Adrenal gland (tissue), 19 donors: ENCODE measurements at regions of chr5 and their contacts with region 1.

Region 1: GRCh38 chr5:143824851-143825720 is 13.1 kb downstream of the HMHB1 start:
- DNase-seq: peak; percentile 68 to 93 (median 82)
- H3K4me3 ChIP-seq: no peak overlapping the region
- H3K27ac ChIP-seq: no peak overlapping the region
- H3K4me1 ChIP-seq: no peaks in the 10 kb centered on the region
- H3K27me3 ChIP-seq: no peaks in the 10 kb centered on the region
- CTCF ChIP-seq: peak; percentile 87 to 95 (median 92)
- POLR2A ChIP-seq: no peak

Region 2: GRCh38 chr5:142922223-142922952 is 902.7 kb before region 1 on chr5:
- intact Hi-C with region 1: loop called in 1 of 2 experiments (anchors 10 kb)
- DNase-seq: no peak
- H3K4me3 ChIP-seq: no peak overlapping the region
- H3K27ac ChIP-seq: no peak overlapping the region
- H3K4me1 ChIP-seq: peaks cover 0 to 21% of the 10 kb centered on the region in 2 donors
- H3K27me3 ChIP-seq: no peaks in the 10 kb centered on the region
- CTCF ChIP-seq: peak; percentile 22 to 70 (median 54)
- POLR2A ChIP-seq: no peak

Region 3: GRCh38 chr5:143002459-143003328 is 822.4 kb before region 1 on chr5:
- intact Hi-C with region 1: loop called in 1 of 2 experiments (anchors 10 kb)
- DNase-seq: peak in 5 of 7 donors; percentile 23 to 56 (median 35)
- H3K4me3 ChIP-seq: no peak overlapping the region
- H3K27ac ChIP-seq: peak overlapping the region in 2 of 5 donors; percentile 53 to 63
- H3K4me1 ChIP-seq: peaks cover 6 to 30% of the 10 kb centered on the region in 2 donors
- H3K27me3 ChIP-seq: no peaks in the 10 kb centered on the region
- CTCF ChIP-seq: peak; percentile 26 to 64 (median 54)
- POLR2A ChIP-seq: no peak

Region 4: DNA sequence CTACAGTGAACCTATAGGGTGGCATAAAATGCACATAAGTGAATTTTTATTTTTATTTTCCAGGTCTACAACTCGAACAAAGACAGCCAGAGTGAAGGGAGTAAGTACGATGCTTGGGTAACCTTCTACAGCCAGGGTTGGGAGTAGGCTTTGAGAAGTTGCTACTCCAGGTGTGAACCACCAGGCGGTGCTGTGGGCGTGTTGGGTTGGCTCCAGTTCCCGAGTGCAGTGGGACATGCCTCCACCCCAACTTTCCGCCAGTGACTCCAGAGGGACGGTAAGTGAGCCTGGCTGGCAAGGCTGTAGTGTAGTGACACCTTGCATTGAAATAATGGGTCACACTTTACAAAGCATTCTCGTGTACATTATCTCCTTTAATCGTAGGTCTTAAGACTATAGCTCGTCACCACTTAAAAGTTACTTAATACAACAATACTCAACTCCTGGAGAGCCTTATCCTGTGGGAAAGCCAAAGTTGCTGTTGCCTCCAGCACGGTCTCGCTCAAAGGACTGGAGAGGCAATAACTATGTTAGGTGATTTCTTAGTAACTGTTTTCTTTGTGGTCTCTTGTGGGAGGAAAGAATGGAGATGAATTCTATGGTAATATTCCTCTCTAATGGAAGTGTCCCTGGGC is 811.0 kb before region 1 on chr5:
- intact Hi-C with region 1: loop called (anchors 5 to 10 kb)
- DNase-seq: peak in 4 of 7 donors; percentile 16 to 51 (median 32)
- H3K4me3 ChIP-seq: no peak overlapping the region
- H3K27ac ChIP-seq: no peak overlapping the region
- H3K4me1 ChIP-seq: peaks cover 0 to 9% of the 10 kb centered on the region in 2 donors
- H3K27me3 ChIP-seq: no peaks in the 10 kb centered on the region
- CTCF ChIP-seq: peak in 5 of 6 experiments; percentile 17 to 59 (median 34)
- POLR2A ChIP-seq: no peak

Region 5: DNA sequence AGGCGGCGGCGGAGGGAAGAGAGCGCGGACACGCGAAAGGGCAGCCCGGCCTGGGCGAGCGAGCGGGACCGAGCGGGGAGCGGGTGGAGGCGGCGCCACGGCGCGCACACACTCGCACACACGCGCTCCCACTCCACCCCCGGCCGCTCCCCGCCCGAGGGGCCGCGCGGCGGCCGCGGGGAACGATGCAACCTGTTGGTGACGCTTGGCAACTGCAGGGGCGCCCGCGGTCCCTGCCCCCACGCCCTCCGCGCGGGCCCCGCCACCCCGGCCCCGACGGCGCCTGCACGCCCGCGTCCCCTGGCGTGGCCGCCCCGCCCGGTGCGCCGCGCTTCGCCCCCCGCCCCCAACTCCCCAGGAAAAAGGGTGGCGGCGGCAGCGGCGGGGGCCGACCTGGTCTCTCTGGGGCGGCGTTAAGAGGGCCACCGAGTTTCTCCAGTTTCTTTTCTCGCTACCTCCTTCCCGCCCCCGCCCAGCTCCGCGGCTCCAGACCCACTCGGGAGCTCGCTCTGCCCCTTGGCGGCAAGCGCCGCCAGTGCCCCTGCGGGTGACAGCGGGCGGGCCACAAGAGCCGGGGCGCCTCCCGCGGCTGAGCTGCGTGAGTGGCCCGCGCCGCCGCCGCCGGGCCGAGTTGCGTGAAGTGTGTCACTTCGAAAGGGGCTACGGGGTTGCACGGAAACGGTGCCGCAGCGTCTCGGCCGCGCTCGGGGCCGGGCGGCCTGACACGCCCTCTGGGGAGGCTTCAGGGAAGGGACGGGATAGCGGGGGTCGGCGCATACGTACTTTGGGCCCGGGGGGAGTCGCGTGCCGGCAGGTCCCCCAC is 421.3 kb before region 1 on chr5 and contains the start of gene NR3C1:
- intact Hi-C with region 1: loop called in 1 of 2 experiments (anchors 10 kb)
- DNase-seq: peak; percentile 82 to 90 (median 84)
- H3K4me3 ChIP-seq: peak within 1 kb of the TSS; percentile 84 to 98 (median 92)
- H3K27ac ChIP-seq: peak within 1 kb of the TSS; percentile 75 to 97 (median 95)
- H3K4me1 ChIP-seq: peaks cover 8 to 20% of the 10 kb centered on the region in 2 donors
- H3K27me3 ChIP-seq: no peaks in the 10 kb centered on the region
- CTCF ChIP-seq: peak in 5 of 6 experiments; percentile 38 to 70 (median 55)
- POLR2A ChIP-seq: peak in 1 of 2 donors; percentile 52
- total RNA-seq, gene NR3C1: 16.7 to 35.5 (median 27.7) TPM

Region 6: DNA sequence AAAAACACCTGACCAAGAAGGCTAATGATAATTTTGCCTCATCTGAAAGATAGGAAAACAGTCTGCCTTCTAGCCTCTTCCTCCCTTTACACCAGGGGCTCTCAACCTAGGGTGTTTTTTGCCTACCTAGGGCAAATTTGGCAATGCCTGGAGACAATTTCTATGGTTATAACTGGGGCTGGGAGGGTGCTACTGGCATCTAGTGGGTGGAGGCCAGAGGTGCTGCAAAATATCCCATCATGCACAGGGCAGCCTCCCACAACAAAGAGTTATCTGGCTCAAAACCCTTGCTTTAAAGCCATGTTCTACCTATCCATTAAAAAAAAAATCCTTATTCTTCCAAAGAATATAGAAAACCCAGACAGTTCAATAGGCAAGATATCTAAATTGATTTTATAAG is 376.6 kb before region 1 on chr5:
- intact Hi-C with region 1: no loop called
- DNase-seq: no peak
- H3K4me3 ChIP-seq: no peak overlapping the region
- H3K27ac ChIP-seq: no peak overlapping the region
- H3K4me1 ChIP-seq: no peaks in the 10 kb centered on the region
- H3K27me3 ChIP-seq: peaks cover 2% of the 10 kb centered on the region
- CTCF ChIP-seq: no peak
- POLR2A ChIP-seq: no peak

Region 7: GRCh38 chr5:143673676-143674447 is 151.2 kb before region 1 on chr5:
- intact Hi-C with region 1: no loop called
- DNase-seq: no peak
- H3K4me3 ChIP-seq: no peak overlapping the region
- H3K27ac ChIP-seq: no peak overlapping the region
- H3K4me1 ChIP-seq: no peaks in the 10 kb centered on the region
- H3K27me3 ChIP-seq: no peaks in the 10 kb centered on the region
- CTCF ChIP-seq: no peak
- POLR2A ChIP-seq: no peak

Region 8: GRCh38 chr5:143758750-143759149 is 66.3 kb before region 1 on chr5:
- intact Hi-C with region 1: no loop called
- DNase-seq: no peak
- H3K4me3 ChIP-seq: no peak overlapping the region
- H3K27ac ChIP-seq: no peak overlapping the region
- H3K4me1 ChIP-seq: no peaks in the 10 kb centered on the region
- H3K27me3 ChIP-seq: no peaks in the 10 kb centered on the region
- CTCF ChIP-seq: no peak
- POLR2A ChIP-seq: no peak

Region 9: DNA sequence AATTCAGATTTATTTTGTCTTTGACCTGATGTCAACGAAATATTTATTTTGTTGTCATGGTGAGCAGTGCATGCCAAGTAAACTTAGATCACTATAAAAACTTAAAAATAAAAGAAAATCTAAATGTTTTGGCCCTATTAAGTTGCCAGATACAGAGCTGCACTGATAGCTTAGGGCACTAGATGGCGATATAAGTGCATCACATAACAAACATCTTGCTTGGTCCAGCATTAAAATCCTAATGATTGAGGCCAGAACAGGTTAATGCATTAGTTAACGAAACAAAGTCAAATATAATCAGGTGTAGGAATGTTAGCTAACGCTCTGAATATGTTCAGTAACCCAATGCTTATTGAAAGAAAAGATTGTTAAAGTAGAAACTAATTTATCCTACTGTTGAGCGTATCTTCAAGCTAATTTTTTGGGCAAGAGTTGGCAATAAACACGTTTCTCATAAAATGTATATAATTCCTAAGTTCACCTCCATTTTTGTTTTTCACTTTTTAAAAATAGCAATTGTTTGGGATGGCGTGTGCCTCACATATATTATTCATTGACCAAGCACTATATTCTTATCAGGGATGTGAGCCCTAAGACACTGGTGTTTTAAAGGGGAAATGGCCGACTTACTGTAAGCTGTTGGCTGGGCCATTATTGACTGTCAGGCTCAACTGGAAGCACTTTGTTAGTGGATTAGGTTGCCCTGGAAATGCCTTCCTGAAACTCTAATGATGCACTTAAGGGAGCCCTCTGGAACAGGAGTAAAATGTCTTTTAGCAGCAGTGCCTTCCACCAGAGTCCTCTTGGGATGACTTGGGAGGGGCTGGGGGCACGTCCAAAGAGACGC is 378.9 kb after region 1 on chr5:
- intact Hi-C with region 1: no loop called
- DNase-seq: peak; percentile 18 to 73 (median 44)
- H3K4me3 ChIP-seq: no peak overlapping the region
- H3K27ac ChIP-seq: no peak overlapping the region
- H3K4me1 ChIP-seq: no peaks in the 10 kb centered on the region
- H3K27me3 ChIP-seq: peaks cover 17% of the 10 kb centered on the region
- CTCF ChIP-seq: peak; percentile 66 to 91 (median 82)
- POLR2A ChIP-seq: no peak